ENCODE measurements at regions of chr17 and their contacts with region 1.

Region 1: GRCh38 chr17:16589097-16589969 is 20.3 kb upstream of the ZNF287 start:
- DNase-seq: peak; percentile 95
- H3K4me3 ChIP-seq: peak overlapping the region; percentile 61 to 69
- H3K27ac ChIP-seq: peak overlapping the region in 1 of 2 experiments; percentile 8; a peak in 1 of 4 replicates
- H3K4me1 ChIP-seq: no peaks in the 10 kb centered on the region; a peak in 1 of 4 replicates
- H3K27me3 ChIP-seq: no peaks in the 10 kb centered on the region; the same call in 1 of the 2 replicates
- CTCF ChIP-seq: peak; percentile 97
- EP300 ChIP-seq: no peak
- RAD21 ChIP-seq: peak; percentile 69

Region 2: GRCh38 chr17:16537130-16537458 is 52.2 kb before region 1 on chr17:
- CTCF ChIA-PET with region 1: interaction called, 32 read pairs
- POLR2A ChIA-PET with region 1: interaction called, 5 read pairs
- DNase-seq: no peak
- H3K4me3 ChIP-seq: peak overlapping the region in 1 of 2 experiments; percentile 70; a peak in 1 of 4 replicates
- H3K27ac ChIP-seq: no peak overlapping the region
- H3K4me1 ChIP-seq: no peaks in the 10 kb centered on the region; a peak in 1 of 4 replicates
- H3K27me3 ChIP-seq: no peaks in the 10 kb centered on the region
- CTCF ChIP-seq: no peak
- EP300 ChIP-seq: no peak
- RAD21 ChIP-seq: no peak

Region 3: GRCh38 chr17:16568541-16569357 is 20.6 kb before region 1 on chr17 and contains the start of gene ZNF287:
- CTCF ChIA-PET with region 1: interaction called, 21 read pairs
- POLR2A ChIA-PET with region 1: no interaction called
- DNase-seq: peak; percentile 98
- H3K4me3 ChIP-seq: peak within 1 kb of the TSS; percentile 81 to 87
- H3K27ac ChIP-seq: peak within 1 kb of the TSS in 1 of 2 experiments; percentile 72; a peak in 1 of 4 replicates
- H3K4me1 ChIP-seq: peaks cover 0 to 10% of the 10 kb centered on the region in 2 experiments; a peak in 2 of 4 replicates
- H3K27me3 ChIP-seq: no peaks in the 10 kb centered on the region; the same call in 1 of the 2 replicates
- CTCF ChIP-seq: no peak
- EP300 ChIP-seq: no peak
- RAD21 ChIP-seq: no peak
- polyA plus RNA-seq, gene ZNF287: 6.1 and 6.6 TPM in 2 replicates

Region 4: GRCh38 chr17:16661217-16661616 is 71.9 kb after region 1 on chr17:
- CTCF ChIA-PET with region 1: no interaction called
- POLR2A ChIA-PET with region 1: no interaction called
- DNase-seq: no peak
- H3K4me3 ChIP-seq: no peak overlapping the region
- H3K27ac ChIP-seq: no peak overlapping the region
- H3K4me1 ChIP-seq: no peaks in the 10 kb centered on the region
- H3K27me3 ChIP-seq: peaks cover 22% of the 10 kb centered on the region; the same call in 1 of the 2 replicates
- CTCF ChIP-seq: no peak
- EP300 ChIP-seq: no peak
- RAD21 ChIP-seq: no peak

Region 5: GRCh38 chr17:16676676-16677268 is 87.4 kb after region 1 on chr17:
- CTCF ChIA-PET with region 1: no interaction called
- POLR2A ChIA-PET with region 1: no interaction called
- DNase-seq: peak; percentile 36
- H3K4me3 ChIP-seq: no peak overlapping the region
- H3K27ac ChIP-seq: no peak overlapping the region
- H3K4me1 ChIP-seq: no peaks in the 10 kb centered on the region; a peak in 1 of 4 replicates
- H3K27me3 ChIP-seq: peaks cover 19% of the 10 kb centered on the region; the same call in 1 of the 2 replicates
- CTCF ChIP-seq: no peak
- EP300 ChIP-seq: peak in 1 of 2 experiments; percentile 25; a peak in 1 of 4 replicates
- RAD21 ChIP-seq: no peak